ENCODE measurements at regions of chr3 and their contacts with region 1.

Region 1: DNA sequence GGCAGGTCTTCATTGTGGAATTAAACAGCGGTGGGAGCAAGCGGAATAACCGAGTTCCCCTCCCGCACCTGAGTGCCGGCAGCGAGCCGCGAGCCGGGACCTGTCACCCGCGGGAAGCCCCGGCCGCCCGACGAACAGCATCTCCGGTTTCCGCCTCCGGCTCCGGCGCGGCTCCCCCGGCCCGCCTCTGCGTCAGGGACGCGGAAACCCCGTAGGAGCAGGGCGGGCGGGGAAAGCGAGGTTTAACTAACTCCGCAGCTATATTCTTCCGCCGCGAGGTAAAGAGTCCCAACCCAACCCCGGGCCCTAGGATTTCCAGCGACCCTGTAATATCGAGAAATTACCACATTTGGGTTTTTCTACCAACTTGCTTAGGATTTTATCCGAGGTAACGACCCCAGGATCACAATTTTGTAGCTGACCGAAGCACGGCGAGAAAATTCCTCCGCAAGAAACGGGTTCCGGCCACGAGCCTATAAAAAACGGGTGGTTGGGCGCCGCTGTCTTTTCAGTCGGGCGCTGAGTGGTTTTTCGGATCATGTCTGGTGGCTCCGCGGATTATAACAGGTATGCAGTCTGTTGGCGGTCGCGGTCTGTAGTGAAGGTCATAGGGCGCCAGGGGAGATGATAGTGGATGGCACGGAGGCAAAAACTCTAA is at the start of gene EIF4A2:
- DNase-seq: peak; percentile 84 to 96 (median 89)
- ATAC-seq: peak; percentile 68
- H3K4me3 ChIP-seq: peak within 1 kb of the TSS; percentile 92
- H3K4me3 Mint-ChIP-seq: peak within 1 kb of the TSS; percentile 95
- H3K27ac ChIP-seq: peak within 1 kb of the TSS; percentile 96 to 99
- H3K27ac Mint-ChIP-seq: peak within 1 kb of the TSS; percentile 96
- H3K4me1 ChIP-seq: peaks cover 32% of the 10 kb centered on the region
- H3K4me1 Mint-ChIP-seq: peaks cover 59% of the 10 kb centered on the region
- H3K27me3 ChIP-seq: no peaks in the 10 kb centered on the region
- H3K27me3 Mint-ChIP-seq: peaks cover 5% of the 10 kb centered on the region
- CTCF ChIP-seq: no peak
- total RNA-seq, gene EIF4A2: 1,039 to 1,046 TPM

Region 2: GRCh38 chr3:185362850-185363661 is 1420.1 kb before region 1 on chr3 and contains the start of gene MAP3K13:
- CTCF ChIA-PET with region 1: no interaction called
- POLR2A ChIA-PET with region 1: no interaction called
- intact Hi-C with region 1: no loop called
- DNase-seq: peak in 7 of 14 experiments; percentile 1 to 75 (median 32)
- ATAC-seq: peak; percentile 93
- H3K4me3 ChIP-seq: peak within 1 kb of the TSS; percentile 51
- H3K4me3 Mint-ChIP-seq: peak within 1 kb of the TSS; percentile 70
- H3K27ac ChIP-seq: no peak within 1 kb of the TSS
- H3K27ac Mint-ChIP-seq: no peak within 1 kb of the TSS
- H3K4me1 ChIP-seq: peaks cover 11% of the 10 kb centered on the region
- H3K4me1 Mint-ChIP-seq: peaks cover 16% of the 10 kb centered on the region
- H3K27me3 ChIP-seq: peaks cover 16 to 45% of the 10 kb centered on the region in 2 experiments
- H3K27me3 Mint-ChIP-seq: peaks cover 72% of the 10 kb centered on the region
- CTCF ChIP-seq: no peak
- total RNA-seq, gene MAP3K13: 4.3 to 5.7 TPM

Region 3: GRCh38 chr3:185942907-185943759 is 840.1 kb before region 1 on chr3:
- CTCF ChIA-PET with region 1: interaction called, 3 read pairs
- POLR2A ChIA-PET with region 1: interaction called, 72 read pairs
- intact Hi-C with region 1: loop called (anchors 5 kb)
- DNase-seq: peak; percentile 76 to 93 (median 80)
- ATAC-seq: peak; percentile 100
- H3K4me3 ChIP-seq: peak overlapping the region; percentile 19
- H3K4me3 Mint-ChIP-seq: peak overlapping the region; percentile 52
- H3K27ac ChIP-seq: no peak overlapping the region
- H3K27ac Mint-ChIP-seq: peak overlapping the region; percentile 70
- H3K4me1 ChIP-seq: peaks cover 15% of the 10 kb centered on the region
- H3K4me1 Mint-ChIP-seq: peaks cover 23% of the 10 kb centered on the region
- H3K27me3 ChIP-seq: no peaks in the 10 kb centered on the region
- H3K27me3 Mint-ChIP-seq: no peaks in the 10 kb centered on the region
- CTCF ChIP-seq: peak; percentile 98

Region 4: GRCh38 chr3:186772701-186773424 is 10.3 kb before region 1 on chr3:
- CTCF ChIA-PET with region 1: no interaction called
- POLR2A ChIA-PET with region 1: interaction called, 164 read pairs
- intact Hi-C with region 1: no loop called
- DNase-seq: peak; percentile 27 to 77 (median 52)
- ATAC-seq: peak; percentile 87
- H3K4me3 ChIP-seq: peak overlapping the region; percentile 82
- H3K4me3 Mint-ChIP-seq: peak overlapping the region; percentile 97
- H3K27ac ChIP-seq: peak overlapping the region; percentile 67 to 77
- H3K27ac Mint-ChIP-seq: peak overlapping the region; percentile 80
- H3K4me1 ChIP-seq: peaks cover 16% of the 10 kb centered on the region
- H3K4me1 Mint-ChIP-seq: peaks cover 19% of the 10 kb centered on the region
- H3K27me3 ChIP-seq: no peaks in the 10 kb centered on the region
- H3K27me3 Mint-ChIP-seq: no peaks in the 10 kb centered on the region
- CTCF ChIP-seq: no peak

Region 5: DNA sequence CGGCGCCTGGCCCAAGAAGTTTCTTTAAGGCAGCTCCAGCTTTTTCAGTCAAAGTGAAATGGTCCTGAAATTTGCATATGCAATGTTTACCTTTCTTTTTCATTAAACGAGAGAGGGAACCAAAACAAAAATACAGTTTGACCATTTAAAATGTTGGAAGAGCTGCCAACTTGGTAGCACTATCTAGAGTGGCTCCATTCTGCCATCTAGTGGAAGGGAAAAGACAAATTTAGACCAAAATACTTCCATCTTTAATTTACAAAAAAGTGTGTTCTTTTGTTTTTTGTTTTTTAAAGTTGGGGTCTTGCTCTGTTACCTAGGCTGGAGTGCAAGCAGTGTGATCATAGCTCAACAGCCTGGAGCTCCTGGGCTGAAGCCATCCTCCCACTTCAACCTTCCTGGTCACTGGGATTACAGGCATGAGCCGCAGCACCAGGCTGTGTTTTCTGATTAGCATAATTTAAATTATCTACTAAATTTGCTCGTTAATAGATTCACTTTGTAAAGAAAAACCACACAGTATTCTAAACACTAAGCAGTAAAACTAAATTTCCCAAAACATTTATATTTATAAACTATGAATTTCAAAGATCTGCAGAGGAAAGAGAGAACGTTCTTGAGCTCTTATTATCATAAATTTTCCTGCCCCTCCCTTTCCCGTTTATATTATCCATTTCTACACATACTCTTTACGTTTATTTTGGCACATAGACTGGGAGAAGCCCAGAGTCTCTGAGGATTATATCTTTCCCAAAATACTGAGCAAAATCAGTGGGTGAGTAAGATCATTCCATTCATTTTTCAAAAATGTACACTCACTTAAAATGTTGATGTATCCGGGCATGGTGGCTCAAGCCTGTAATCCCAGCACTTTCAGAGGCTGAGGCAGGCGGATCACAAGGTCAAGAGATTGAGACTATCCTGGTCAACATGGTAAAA is 38.5 kb after region 1 on chr3:
- CTCF ChIA-PET with region 1: interaction called, 3 read pairs
- POLR2A ChIA-PET with region 1: interaction called, 69 read pairs
- intact Hi-C with region 1: loop called in 1 of 2 experiments (anchors 5 kb)
- DNase-seq: peak in 4 of 14 experiments; percentile 31 to 75 (median 70)
- ATAC-seq: no peak
- H3K4me3 ChIP-seq: no peak overlapping the region
- H3K4me3 Mint-ChIP-seq: no peak overlapping the region
- H3K27ac ChIP-seq: no peak overlapping the region
- H3K27ac Mint-ChIP-seq: no peak overlapping the region
- H3K4me1 ChIP-seq: peaks cover 16% of the 10 kb centered on the region
- H3K4me1 Mint-ChIP-seq: peaks cover 14% of the 10 kb centered on the region
- H3K27me3 ChIP-seq: peaks cover 20 to 25% of the 10 kb centered on the region in 2 experiments
- H3K27me3 Mint-ChIP-seq: peaks cover 20% of the 10 kb centered on the region
- CTCF ChIP-seq: peak; percentile 78

Region 6: GRCh38 chr3:186888569-186888968 is 105.4 kb after region 1 on chr3:
- CTCF ChIA-PET with region 1: no interaction called
- POLR2A ChIA-PET with region 1: no interaction called
- intact Hi-C with region 1: no loop called
- DNase-seq: no peak
- ATAC-seq: no peak
- H3K4me3 ChIP-seq: no peak overlapping the region
- H3K4me3 Mint-ChIP-seq: no peak overlapping the region
- H3K27ac ChIP-seq: no peak overlapping the region
- H3K27ac Mint-ChIP-seq: no peak overlapping the region
- H3K4me1 ChIP-seq: peaks cover 3% of the 10 kb centered on the region
- H3K4me1 Mint-ChIP-seq: peaks cover 10% of the 10 kb centered on the region
- H3K27me3 ChIP-seq: no peaks in the 10 kb centered on the region
- H3K27me3 Mint-ChIP-seq: no peaks in the 10 kb centered on the region
- CTCF ChIP-seq: no peak

Region 7: GRCh38 chr3:186930641-186931531 is 147.7 kb after region 1 on chr3:
- CTCF ChIA-PET with region 1: no interaction called
- POLR2A ChIA-PET with region 1: interaction called, 30 read pairs
- intact Hi-C with region 1: no loop called
- DNase-seq: peak; percentile 47 to 88 (median 62)
- ATAC-seq: peak; percentile 76
- H3K4me3 ChIP-seq: peak overlapping the region; percentile 97
- H3K4me3 Mint-ChIP-seq: peak overlapping the region; percentile 100
- H3K27ac ChIP-seq: peak overlapping the region; percentile 68 to 87
- H3K27ac Mint-ChIP-seq: peak overlapping the region; percentile 94
- H3K4me1 ChIP-seq: peaks cover 34% of the 10 kb centered on the region
- H3K4me1 Mint-ChIP-seq: peaks cover 43% of the 10 kb centered on the region
- H3K27me3 ChIP-seq: no peaks in the 10 kb centered on the region
- H3K27me3 Mint-ChIP-seq: no peaks in the 10 kb centered on the region
- CTCF ChIP-seq: peak; percentile 48

Measured in CD4-positive, alpha-beta T cell (primary cell).